ENCODE measurements at regions of chr10 and their contacts with region 1.

Region 1: GRCh38 chr10:97534746-97535367 is 36.1 kb downstream of the UBTD1 start:
- DNase-seq: peak; percentile 52
- ATAC-seq: peak; percentile 73
- H3K4me3 Mint-ChIP-seq: no peak overlapping the region
- H3K27ac Mint-ChIP-seq: no peak overlapping the region
- H3K4me1 Mint-ChIP-seq: no peaks in the 10 kb centered on the region
- H3K27me3 Mint-ChIP-seq: no peaks in the 10 kb centered on the region

Region 2: DNA sequence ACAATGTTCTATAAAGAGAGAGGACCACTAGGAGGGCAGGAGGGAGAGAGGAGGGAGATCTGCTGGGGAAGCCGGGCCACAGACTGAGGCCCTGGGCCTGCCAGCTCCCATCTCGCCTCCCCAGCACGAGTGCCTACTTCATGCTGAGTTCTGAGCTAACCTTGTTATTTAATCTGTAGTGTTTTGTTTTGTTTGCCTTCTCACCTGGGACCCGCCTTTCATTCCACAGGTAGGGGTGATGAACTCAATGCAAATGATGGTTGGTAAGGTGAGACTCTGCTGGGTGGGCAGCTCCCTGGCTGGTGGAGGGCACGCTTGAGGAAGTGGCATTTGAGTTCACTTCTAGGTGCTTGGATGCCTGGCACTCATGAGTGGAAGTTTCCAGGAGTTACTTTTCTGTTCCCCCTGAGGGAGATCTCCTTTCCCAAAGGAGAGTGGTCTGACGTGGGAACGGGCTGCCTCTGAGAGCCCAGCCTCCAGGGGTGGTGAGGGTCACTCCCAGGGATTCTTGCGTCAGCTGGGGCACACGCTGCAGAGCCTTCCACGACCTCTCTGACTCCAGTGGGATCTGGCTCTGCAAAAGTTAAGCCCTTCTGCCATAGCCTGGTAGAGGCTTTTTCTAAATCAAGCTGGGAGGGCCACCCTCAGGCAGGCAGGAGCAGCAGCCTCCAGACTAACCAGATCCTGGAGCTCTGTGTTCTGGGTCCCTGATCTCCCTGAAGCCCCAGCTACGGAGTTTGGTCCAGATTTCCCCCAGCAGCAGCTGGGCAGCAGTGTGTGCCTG is 13.7 kb before region 1 on chr10:
- CTCF ChIA-PET with region 1: interaction called, 11 read pairs
- DNase-seq: no peak
- ATAC-seq: no peak
- H3K4me3 Mint-ChIP-seq: no peak overlapping the region
- H3K27ac Mint-ChIP-seq: no peak overlapping the region
- H3K4me1 Mint-ChIP-seq: peaks cover 3% of the 10 kb centered on the region
- H3K27me3 Mint-ChIP-seq: peaks cover 28% of the 10 kb centered on the region

Region 3: GRCh38 chr10:97553575-97554031 is 18.7 kb after region 1 on chr10:
- CTCF ChIA-PET with region 1: interaction called, 35 read pairs
- DNase-seq: peak; percentile 66
- ATAC-seq: peak; percentile 98
- H3K4me3 Mint-ChIP-seq: no peak overlapping the region
- H3K27ac Mint-ChIP-seq: no peak overlapping the region
- H3K4me1 Mint-ChIP-seq: peaks cover 1% of the 10 kb centered on the region
- H3K27me3 Mint-ChIP-seq: peaks cover 3% of the 10 kb centered on the region

Measured in activated CD8-positive, alpha-beta memory T cell treated with anti-CD3 and anti-CD28 coated beads, Interleukin-2, amount 10 ng/mL, durations not matched to agents 7 days and 5 days (primary cell).